ENCODE measurements at regions of chr7 and their contacts with region 1.

Region 1: DNA sequence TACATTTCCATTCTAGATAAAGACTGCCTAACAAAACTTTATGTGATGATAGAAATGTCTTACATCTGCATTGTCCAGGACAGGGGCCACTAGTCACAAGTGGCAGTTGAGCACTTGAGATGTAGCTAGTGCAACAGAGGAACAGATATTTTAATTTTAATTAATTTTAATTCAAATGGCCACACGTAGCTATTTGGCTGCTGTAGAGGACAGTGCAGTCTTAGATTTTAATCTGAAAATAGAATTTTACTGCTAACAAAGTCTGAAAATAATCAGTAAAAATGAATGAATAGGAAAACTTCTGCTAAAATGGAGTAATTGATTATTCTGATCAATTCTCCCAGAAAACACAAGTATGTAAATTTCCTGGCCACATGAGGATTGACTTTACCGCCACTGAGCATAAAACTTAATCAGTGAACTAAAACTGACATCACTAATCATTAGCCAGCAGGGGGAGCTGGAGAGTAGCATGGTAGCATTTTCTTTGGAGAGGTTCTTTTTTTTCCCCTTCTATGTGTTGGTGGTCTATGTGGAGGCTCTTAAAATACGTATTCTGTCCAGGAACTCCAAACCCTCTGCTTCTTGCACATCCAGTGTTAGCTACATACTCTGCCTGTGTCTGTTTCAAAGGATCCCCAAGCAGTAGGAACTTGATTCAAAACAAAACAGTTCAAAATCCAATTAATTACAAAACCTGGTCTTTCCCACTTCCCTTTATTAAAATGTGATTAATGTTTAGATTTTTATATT is 52.1 kb downstream of the TSPAN12 start:
- DNase-seq: peak in 1 of 3 donors; percentile 78
- ATAC-seq: peak; percentile 69
- H3K4me3 ChIP-seq: no peak overlapping the region
- H3K4me1 ChIP-seq: no peaks in the 10 kb centered on the region
- CTCF ChIP-seq: peak; percentile 67

Region 2: GRCh38 chr7:120526902-120527509 is 278.8 kb before region 1 on chr7:
- intact Hi-C with region 1: no loop called
- DNase-seq: no peak
- ATAC-seq: no peak
- H3K4me3 ChIP-seq: no peak overlapping the region
- H3K4me1 ChIP-seq: no peaks in the 10 kb centered on the region
- CTCF ChIP-seq: no peak

Region 3: GRCh38 chr7:120740348-120740747 is 65.5 kb before region 1 on chr7:
- intact Hi-C with region 1: no loop called
- DNase-seq: no peak
- ATAC-seq: no peak
- H3K4me3 ChIP-seq: no peak overlapping the region
- H3K4me1 ChIP-seq: no peaks in the 10 kb centered on the region
- CTCF ChIP-seq: no peak

Region 4: DNA sequence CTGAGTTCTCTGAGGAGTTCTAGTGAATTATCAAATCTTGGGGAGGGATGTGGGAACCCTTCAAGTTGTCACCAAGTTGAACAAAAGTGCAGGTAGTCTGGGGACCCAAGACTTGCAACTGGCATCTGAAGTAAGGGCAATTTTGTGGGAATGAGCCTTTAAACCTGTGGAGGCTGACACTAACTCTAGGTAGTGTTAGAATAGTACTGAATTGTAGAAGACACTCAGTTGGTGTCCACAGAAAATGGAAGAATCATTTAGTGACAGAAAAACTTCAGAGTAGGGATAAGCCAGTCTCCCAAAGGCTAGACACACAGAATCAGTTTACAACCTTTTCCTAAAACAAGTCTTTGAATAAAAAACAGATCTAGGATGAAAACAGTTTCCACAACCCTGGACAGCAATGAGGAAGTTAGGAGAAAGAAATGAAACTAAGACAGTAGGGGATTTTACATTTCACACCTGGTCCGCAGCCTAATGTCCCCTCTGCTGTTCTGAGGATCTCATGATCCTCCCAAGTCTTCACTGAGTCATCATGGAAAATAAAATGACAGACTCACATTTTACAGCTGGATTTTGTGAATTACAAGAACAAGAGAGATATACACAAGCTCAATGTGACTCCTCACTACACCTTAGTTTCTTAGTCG is 121.8 kb after region 1 on chr7:
- intact Hi-C with region 1: no loop called
- DNase-seq: no peak
- ATAC-seq: peak; percentile 41
- H3K4me3 ChIP-seq: no peak overlapping the region
- H3K4me1 ChIP-seq: no peaks in the 10 kb centered on the region
- CTCF ChIP-seq: no peak

Region 5: DNA sequence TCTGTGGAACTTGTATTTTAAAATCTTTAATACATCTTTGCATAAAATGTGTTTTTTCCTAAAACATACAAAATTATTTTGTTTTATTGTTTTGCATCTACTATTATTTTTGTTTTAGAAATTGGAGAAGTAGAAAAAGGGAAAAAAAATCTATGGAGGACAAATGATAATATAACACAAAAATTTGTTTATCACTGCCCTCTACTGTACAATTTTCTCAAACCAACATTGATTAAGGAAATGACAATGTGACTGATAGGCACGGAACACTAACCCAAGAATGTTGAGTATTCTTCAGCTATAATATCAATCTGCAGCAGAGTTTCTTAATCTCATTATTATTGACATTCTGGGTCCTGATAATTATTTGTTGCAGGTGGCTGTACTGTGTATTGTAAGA is 135.3 kb after region 1 on chr7:
- intact Hi-C with region 1: loop called (anchors 5 kb)
- DNase-seq: no peak
- ATAC-seq: peak; percentile 50
- H3K4me3 ChIP-seq: no peak overlapping the region
- H3K4me1 ChIP-seq: peaks cover 10% of the 10 kb centered on the region
- CTCF ChIP-seq: no peak

Region 6: DNA sequence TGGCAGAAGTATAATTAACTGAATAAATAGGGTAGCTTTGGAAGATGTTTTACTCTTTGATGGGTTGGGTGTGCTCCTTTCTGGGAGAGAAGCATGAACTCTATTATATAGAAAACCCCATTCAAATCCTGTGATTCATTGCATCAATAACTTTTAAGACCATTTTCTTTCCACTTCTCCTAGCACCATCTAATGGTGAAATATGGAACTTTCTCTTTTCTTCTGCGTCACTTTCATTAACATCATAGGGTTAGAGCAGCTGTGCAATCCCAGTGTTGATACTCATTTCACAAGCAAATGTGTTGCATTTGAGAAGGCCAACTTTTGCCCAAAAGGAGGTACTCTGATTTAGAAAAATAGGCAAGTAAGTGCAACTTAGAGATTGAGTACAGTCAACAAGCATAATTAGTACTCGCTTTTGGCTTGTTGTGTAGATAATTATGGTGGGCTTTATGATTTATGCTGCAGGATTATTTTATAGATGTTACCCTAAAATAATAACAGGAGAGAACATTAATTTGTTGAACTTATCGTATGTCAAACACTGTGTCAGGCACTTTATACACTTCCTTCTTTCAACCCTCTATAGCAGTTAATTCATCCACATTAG is 275.6 kb after region 1 on chr7:
- intact Hi-C with region 1: loop called in 1 of 2 experiments (anchors 10 kb)
- DNase-seq: peak in 1 of 3 donors; percentile 14
- ATAC-seq: peak; percentile 68
- H3K4me3 ChIP-seq: no peak overlapping the region
- H3K4me1 ChIP-seq: no peaks in the 10 kb centered on the region
- CTCF ChIP-seq: no peak

Region 7: GRCh38 chr7:121442845-121443244 is 637.0 kb after region 1 on chr7:
- intact Hi-C with region 1: no loop called
- DNase-seq: no peak
- ATAC-seq: no peak
- H3K4me3 ChIP-seq: no peak overlapping the region
- H3K4me1 ChIP-seq: peaks cover 7% of the 10 kb centered on the region
- CTCF ChIP-seq: no peak

Measured in mucosa of descending colon (tissue), 3 donors.